Right ventricle myocardium inferior (tissue), 1 donor: ENCODE measurements at regions of chr11 and their contacts with region 1.

Region 1: GRCh38 chr11:72642884-72643511 is 31.2 kb downstream of the PDE2A start:
- DNase-seq: peak; percentile 87
- ATAC-seq: peak; percentile 82

Region 2: DNA sequence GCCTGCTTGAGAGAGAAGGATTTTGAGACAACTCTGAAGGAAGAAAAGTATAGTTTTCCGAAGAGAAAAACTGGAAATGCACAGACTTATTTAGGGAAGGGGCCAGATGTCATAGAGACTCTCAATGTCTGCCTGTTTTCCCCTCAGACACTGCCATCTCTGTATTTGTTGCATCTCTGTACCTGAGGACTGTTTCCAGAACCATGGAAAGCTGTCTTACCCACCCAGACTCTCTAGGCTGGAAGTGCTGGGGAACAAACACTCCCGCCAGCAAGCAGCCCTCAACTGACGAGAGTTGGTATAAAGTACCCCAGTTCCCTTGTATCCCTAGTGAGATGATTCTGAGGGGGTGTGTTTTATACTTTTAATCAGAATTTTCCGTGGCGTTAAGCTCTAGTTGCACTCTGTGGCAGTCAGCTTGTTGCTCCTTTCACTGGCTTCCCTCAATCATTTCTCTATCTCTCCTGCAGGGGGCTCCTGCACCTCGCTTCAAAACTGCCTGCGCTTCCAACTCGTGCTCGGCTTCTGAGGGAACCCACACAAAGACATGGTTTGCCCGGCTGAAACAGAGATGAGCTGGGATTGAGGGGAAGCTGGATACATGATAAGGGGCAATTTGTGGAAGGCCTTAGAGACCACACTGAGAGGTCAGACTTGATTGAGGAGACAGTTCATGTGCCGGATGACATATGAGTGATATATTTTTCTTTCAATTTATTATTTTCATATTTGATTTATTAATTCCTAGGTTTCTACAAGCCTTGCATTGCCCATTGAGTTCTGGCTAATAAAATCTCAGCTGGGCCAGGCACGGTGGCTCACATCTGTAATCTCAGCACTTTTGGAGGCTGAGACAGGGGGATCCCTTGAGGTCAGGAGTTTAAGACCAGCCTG is 171.7 kb before region 1 on chr11:
- intact Hi-C with region 1: loop called (anchors 10 kb)
- DNase-seq: peak; percentile 77
- ATAC-seq: peak; percentile 81

Region 3: GRCh38 chr11:72573072-72573854 is 69.7 kb before region 1 on chr11:
- intact Hi-C with region 1: no loop called
- DNase-seq: no peak
- ATAC-seq: peak; percentile 68

Region 4: GRCh38 chr11:72585762-72586311 is 57.2 kb before region 1 on chr11:
- intact Hi-C with region 1: loop called (anchors 1 kb)
- DNase-seq: peak; percentile 86
- ATAC-seq: peak; percentile 69

Region 5: GRCh38 chr11:72598906-72599305 is 44.1 kb before region 1 on chr11:
- intact Hi-C with region 1: loop called (anchors 1 kb)
- DNase-seq: no peak
- ATAC-seq: peak; percentile 75

Region 6: DNA sequence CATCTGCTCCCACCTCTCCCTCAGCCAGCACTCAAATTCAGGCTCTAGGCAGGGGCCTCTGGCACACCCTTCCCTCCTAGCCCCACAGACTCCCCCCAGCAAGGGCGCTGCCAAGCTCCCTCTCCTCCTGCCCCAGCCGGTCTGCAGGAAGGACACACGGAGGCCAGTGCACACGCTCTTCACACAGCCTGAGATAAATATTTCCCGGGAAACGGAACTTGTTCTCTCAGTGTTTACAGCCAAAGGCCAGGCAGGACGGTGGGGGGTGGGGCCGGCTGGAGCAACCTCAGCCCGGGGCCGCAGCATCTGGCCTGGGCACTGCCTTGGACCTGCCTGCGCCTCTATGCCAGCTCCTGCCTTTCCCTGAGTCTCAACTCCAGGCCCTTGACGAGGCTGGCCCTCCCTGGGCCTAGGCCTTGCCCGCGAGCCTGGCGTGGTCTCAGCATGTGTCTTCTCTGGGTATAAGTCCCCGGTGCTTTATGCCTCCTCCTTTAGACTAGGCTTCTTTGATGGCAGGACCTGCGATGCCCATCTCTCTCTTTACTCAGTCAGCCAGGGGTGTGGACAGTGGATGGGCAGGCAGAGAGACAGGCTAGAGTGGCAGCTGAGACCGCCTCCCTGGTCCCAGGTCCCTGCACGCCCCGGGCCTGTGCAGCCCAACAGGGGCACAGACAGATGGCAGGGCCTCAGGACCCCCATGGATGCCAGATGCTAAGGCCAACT is 17.1 kb before region 1 on chr11:
- intact Hi-C with region 1: loop called (anchors 2 kb)
- DNase-seq: peak; percentile 84
- ATAC-seq: peak; percentile 75

Region 7: GRCh38 chr11:72696866-72697700 is 54.1 kb after region 1 on chr11:
- intact Hi-C with region 1: no loop called
- DNase-seq: no peak
- ATAC-seq: peak; percentile 63